AG04449 (cell line): ENCODE measurements at regions of chr1 and their contacts with region 1.

Region 1: DNA sequence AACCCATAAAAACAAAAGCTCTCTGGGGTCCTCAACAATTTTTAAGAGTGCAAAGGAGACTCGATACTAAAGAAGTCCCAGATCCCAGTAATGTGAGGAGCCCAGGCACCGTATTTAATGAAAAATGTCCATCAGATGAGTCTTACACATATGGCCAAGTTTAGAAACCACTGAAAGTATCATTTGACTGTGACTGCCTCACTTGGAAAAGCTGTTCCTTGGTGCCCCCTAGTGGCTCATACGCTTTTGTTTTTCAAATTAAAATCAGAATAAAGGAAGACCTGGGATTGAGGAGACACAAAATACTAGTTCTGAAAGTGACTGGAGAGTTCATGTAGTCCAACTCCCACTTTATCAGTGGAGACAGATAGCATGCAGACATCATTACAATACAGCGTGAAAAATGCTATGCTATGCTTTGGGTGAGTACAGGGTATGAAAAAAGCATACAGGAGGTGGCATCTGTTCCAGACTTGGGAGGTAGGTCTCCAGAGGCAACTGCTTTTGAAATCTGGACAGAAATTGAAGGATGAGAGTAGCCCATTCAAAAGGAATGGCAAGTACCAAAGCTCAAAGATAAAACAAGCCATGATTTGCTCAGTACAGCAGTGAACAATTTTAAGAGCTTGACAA is 33.8 kb downstream of the GDAP2 start:
- DNase-seq: peak; percentile 71
- H3K4me3 ChIP-seq: no peak overlapping the region
- CTCF ChIP-seq: peak; percentile 64

Region 2: DNA sequence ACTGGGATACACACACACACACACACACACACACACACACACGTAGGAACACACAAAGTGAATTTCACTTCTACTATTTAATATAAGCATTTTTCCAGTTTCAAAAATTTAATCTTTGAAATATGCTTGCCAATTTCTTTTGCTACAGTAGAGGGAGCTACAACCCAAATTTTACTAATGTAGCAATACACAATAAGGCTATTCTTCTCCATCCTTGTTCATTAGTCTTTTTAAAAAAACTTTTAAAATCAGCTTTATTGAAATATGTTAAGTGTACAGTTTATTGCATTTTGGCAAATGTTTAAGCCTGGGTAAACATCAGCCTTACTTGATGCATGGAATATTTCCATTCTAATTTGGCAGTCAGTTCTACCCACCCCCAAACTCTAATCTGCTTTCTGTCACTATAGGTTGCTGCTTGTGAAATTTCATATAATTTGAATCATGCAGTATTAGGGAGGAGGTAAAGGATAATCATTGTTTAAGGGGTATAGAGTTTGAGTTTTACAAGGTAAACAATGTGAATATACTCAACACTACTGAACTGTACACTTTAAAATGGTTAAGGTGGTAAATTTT is 382.8 kb before region 1 on chr1:
- CTCF ChIA-PET with region 1: interaction called, 138 read pairs
- POLR2A ChIA-PET with region 1: no interaction called
- DNase-seq: no peak
- H3K4me3 ChIP-seq: no peak overlapping the region
- CTCF ChIP-seq: peak; percentile 19

Region 3: DNA sequence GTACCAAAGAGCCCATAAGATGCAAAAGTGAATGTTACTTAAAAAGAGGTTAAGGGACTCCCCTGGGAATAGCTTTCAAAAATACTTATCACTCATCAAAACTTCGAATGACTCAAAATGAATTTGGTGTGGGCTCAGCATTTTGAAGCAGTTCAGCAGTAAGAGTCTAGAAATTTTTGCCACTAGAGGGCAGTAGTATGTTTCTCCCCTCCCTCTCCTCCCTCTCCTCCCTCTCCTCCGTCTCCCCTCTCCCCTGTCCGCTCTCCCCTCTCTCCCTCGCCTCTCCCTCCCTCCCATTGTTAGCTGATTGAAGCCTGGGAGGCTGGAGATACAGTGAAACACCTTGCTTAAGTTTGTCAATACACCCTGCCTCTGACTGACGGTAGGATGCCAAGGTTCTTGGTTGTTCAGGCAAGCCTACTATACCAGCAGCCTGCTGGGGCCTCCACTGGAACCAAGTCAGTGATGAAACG is 360.6 kb before region 1 on chr1:
- CTCF ChIA-PET with region 1: interaction called, 78 read pairs
- POLR2A ChIA-PET with region 1: no interaction called
- DNase-seq: no peak
- H3K4me3 ChIP-seq: no peak overlapping the region; the same call in 1 of the 2 replicates
- CTCF ChIP-seq: peak; percentile 65

Region 4: DNA sequence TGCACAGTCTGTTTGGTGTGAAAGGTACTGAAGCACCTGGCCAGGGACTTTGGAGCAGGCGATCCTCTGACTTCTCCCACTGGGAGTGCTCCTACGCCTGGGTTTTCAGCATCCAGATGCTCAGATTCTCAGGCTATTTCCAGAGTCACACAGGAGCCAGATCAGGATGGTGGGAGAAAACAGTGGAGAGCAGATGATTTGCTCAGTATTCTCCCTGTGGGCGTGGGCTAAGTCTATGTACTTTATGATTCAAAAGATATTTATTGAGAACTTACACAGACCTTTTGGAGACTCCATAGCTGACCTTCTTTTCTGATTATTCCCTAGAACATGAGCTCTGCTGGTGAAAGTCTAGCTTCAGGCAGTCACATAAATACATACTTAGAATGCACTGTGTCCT is 155.1 kb before region 1 on chr1:
- CTCF ChIA-PET with region 1: no interaction called
- POLR2A ChIA-PET with region 1: no interaction called
- DNase-seq: no peak
- H3K4me3 ChIP-seq: no peak overlapping the region
- CTCF ChIP-seq: no peak

Region 5: GRCh38 chr1:117815926-117816325 is 79.7 kb before region 1 on chr1:
- CTCF ChIA-PET with region 1: interaction called, 41 read pairs
- POLR2A ChIA-PET with region 1: no interaction called
- DNase-seq: no peak
- H3K4me3 ChIP-seq: no peak overlapping the region
- CTCF ChIP-seq: no peak

Region 6: DNA sequence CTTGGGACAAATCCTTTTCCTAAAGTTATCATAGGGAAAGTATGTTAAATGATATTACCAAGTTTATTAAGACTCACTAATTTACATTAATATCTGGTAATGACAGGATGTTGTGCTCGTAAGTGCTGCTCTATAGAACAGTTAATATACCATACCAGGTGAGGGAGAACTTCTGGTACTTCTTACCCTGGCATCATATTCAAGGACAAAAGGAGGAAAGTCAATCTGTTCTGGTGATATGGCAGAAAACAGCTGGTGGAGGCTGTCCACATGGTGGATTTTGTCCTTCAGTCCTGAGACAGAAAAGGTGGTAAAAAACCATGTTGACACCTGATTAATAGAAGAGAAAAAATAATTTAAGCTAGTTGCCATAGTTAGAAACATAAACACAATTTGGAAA is 17.8 kb before region 1 on chr1:
- CTCF ChIA-PET with region 1: interaction called, 41 read pairs
- POLR2A ChIA-PET with region 1: no interaction called
- DNase-seq: no peak
- H3K4me3 ChIP-seq: no peak overlapping the region
- CTCF ChIP-seq: no peak